A673 (cell line): ENCODE measurements at regions of chr2 and their contacts with region 1.

Region 1: DNA sequence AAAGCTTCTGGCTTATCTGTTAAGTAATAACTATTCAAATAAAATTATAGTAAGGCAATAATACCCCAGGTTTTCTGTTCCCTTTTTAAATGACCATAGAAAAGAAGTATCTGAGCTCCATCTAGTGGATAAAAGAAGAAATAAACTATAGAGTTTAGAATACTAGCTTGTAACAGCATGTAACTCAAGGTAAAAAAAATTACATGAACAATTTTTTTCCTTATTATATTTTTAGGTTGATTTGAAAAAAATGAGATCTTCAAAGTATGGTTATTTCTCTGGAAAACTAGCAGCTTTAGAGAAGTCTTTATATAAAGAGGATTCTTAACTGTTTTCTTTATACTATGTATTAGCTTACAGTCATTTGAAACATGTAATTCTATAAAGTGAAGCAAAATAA is 58.1 kb downstream of the NCKAP1 start:
- DNase-seq: peak; percentile 81
- H3K4me3 ChIP-seq: no peak overlapping the region
- H3K27ac ChIP-seq: no peak overlapping the region
- H3K4me1 ChIP-seq: peaks cover 26% of the 10 kb centered on the region
- H3K27me3 ChIP-seq: no peaks in the 10 kb centered on the region
- CTCF ChIP-seq: peak; percentile 69

Region 2: GRCh38 chr2:182666674-182667314 is 313.3 kb before region 1 on chr2:
- CTCF ChIA-PET with region 1: no interaction called
- POLR2A ChIA-PET with region 1: no interaction called
- intact Hi-C with region 1: loop called (anchors 5 kb)
- DNase-seq: no peak
- H3K4me3 ChIP-seq: no peak overlapping the region
- H3K27ac ChIP-seq: no peak overlapping the region
- H3K4me1 ChIP-seq: peaks cover 7% of the 10 kb centered on the region
- H3K27me3 ChIP-seq: no peaks in the 10 kb centered on the region
- CTCF ChIP-seq: peak; percentile 65

Region 3: GRCh38 chr2:182767578-182767977 is 212.5 kb before region 1 on chr2:
- CTCF ChIA-PET with region 1: interaction called, 12 read pairs
- POLR2A ChIA-PET with region 1: no interaction called
- intact Hi-C with region 1: loop called (anchors 5 kb)
- DNase-seq: peak; percentile 43
- H3K4me3 ChIP-seq: no peak overlapping the region
- H3K27ac ChIP-seq: no peak overlapping the region
- H3K4me1 ChIP-seq: no peaks in the 10 kb centered on the region
- H3K27me3 ChIP-seq: no peaks in the 10 kb centered on the region
- CTCF ChIP-seq: peak; percentile 50

Region 4: GRCh38 chr2:183060571-183061231 is 80.6 kb after region 1 on chr2:
- CTCF ChIA-PET with region 1: no interaction called
- POLR2A ChIA-PET with region 1: no interaction called
- intact Hi-C with region 1: no loop called
- DNase-seq: no peak
- H3K4me3 ChIP-seq: no peak overlapping the region
- H3K27ac ChIP-seq: no peak overlapping the region
- H3K4me1 ChIP-seq: no peaks in the 10 kb centered on the region
- H3K27me3 ChIP-seq: no peaks in the 10 kb centered on the region
- CTCF ChIP-seq: no peak